Panc1 (cell line): ENCODE measurements at regions of chr17 and their contacts with region 1.

Region 1: DNA sequence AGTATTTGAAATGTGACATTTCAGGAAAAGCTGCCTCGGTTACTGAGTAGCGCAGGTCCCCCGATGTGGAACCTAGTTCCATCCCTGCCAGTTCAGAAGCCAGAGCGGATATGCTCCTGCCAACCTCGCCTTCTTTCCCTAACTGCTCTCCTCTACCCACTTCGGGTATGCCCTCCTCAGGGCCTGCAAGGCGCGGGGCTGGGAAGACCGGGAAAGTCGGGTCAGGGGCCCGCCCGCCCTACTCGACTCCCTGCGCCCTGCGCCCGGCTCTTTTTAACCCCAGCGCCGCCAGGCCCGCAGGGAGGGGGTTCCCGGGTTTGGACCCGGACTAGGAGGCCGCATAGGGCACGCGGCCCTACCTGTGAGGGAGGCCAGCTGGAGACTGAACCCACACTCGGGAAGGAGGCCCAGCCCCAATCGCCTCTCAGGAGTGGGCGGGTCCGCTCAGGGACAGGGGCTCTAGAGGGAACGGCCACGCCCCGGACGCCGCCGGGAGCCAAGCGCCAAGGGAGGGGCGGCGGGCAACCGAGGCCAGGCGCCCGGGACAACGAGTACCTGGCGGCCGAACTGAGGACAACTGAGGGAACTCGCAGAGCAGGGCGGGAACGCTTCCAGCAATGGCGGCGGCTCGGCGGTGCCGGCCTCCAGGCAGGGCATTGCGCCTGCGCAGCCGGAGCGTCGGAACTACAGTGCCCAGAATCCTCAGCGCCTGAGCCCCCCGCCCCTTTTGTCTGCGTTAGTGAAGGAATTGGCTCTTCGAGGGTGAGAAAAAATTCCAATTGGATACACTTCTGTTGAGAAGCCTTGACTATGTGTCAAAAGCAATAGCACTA is at the start of gene ZNF624:
- DNase-seq: peak; percentile 76
- ATAC-seq: peak; percentile 97
- H3K4me3 ChIP-seq: peak within 1 kb of the TSS; percentile 75 to 81
- H3K27ac ChIP-seq: peak within 1 kb of the TSS; percentile 83
- H3K4me1 ChIP-seq: peaks cover 3% of the 10 kb centered on the region; the same call in 1 of the 2 replicates
- H3K27me3 ChIP-seq: peaks cover 3% of the 10 kb centered on the region; the same call in 1 of the 2 replicates
- CTCF ChIP-seq: no peak
- total RNA-seq, gene ZNF624: 3.9 TPM

Region 2: GRCh38 chr17:17050346-17051340 is 397.2 kb after region 1 on chr17:
- CTCF ChIA-PET with region 1: no interaction called
- POLR2A ChIA-PET with region 1: interaction called, 11 read pairs
- in situ Hi-C with region 1: no loop called
- intact Hi-C with region 1: no loop called
- DNase-seq: no peak
- ATAC-seq: no peak
- H3K4me3 ChIP-seq: no peak overlapping the region
- H3K27ac ChIP-seq: no peak overlapping the region
- H3K4me1 ChIP-seq: peaks cover 9% of the 10 kb centered on the region
- H3K27me3 ChIP-seq: no peaks in the 10 kb centered on the region
- CTCF ChIP-seq: no peak